GM12878 (cell line): ENCODE measurements at regions of chr3 and their contacts with region 1.

Region 1: GRCh38 chr3:101803173-101803782 is 24.3 kb downstream of the NXPE3 start:
- DNase-seq: no peak
- ATAC-seq: peak; percentile 100
- H3K4me3 ChIP-seq: no peak overlapping the region
- H3K27ac ChIP-seq: no peak overlapping the region
- H3K4me1 ChIP-seq: peaks cover 11% of the 10 kb centered on the region
- H3K27me3 ChIP-seq: no peaks in the 10 kb centered on the region
- CTCF ChIP-seq: peak; percentile 78 to 88 (median 85)
- EP300 ChIP-seq: no peak
- POLR2A ChIP-seq: no peak
- RAD21 ChIP-seq: peak; percentile 70

Region 2: DNA sequence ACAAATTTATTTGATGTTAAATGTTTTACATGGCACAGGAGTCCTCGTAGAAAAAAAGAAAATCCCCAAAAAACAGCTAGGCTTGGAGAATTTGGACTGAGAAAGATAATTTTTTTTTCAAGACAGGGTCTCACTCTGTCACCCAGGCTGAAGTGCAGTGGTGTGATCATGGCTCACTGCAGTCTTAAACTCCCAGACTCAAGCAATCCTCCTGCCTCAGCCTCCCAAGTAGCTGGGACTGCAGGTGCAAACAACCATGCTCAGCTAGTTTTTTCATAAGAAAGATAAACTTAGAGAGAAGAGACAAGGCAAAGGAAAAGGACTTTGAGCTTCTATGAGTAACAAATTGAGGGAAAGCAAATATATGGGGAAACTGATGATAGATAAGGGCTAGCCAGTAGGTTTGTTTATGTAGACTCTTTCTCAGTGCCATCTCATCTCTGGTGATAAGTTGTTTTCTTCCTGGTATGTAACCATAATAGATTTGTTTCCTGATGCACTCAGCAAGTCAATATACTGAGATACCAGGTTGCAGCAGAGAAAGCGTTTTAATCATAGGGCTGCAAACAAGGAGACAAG is 254.7 kb before region 1 on chr3:
- CTCF ChIA-PET with region 1: no interaction called
- POLR2A ChIA-PET with region 1: no interaction called
- RAD21 ChIA-PET with region 1: no interaction called
- SMC1A ChIA-PET with region 1: no interaction called
- in situ Hi-C with region 1: no loop called
- intact Hi-C with region 1: no loop called
- DNase-seq: no peak
- ATAC-seq: no peak
- H3K4me3 ChIP-seq: no peak overlapping the region
- H3K27ac ChIP-seq: no peak overlapping the region
- H3K4me1 ChIP-seq: no peaks in the 10 kb centered on the region
- H3K27me3 ChIP-seq: no peaks in the 10 kb centered on the region
- CTCF ChIP-seq: no peak
- EP300 ChIP-seq: no peak
- POLR2A ChIP-seq: no peak
- RAD21 ChIP-seq: no peak

Region 3: GRCh38 chr3:101643861-101644613 is 159.2 kb before region 1 on chr3:
- CTCF ChIA-PET with region 1: no interaction called
- POLR2A ChIA-PET with region 1: no interaction called
- RAD21 ChIA-PET with region 1: no interaction called
- SMC1A ChIA-PET with region 1: no interaction called
- in situ Hi-C with region 1: no loop called
- intact Hi-C with region 1: no loop called
- DNase-seq: no peak
- ATAC-seq: peak; percentile 69
- H3K4me3 ChIP-seq: no peak overlapping the region
- H3K27ac ChIP-seq: no peak overlapping the region
- H3K4me1 ChIP-seq: no peaks in the 10 kb centered on the region
- H3K27me3 ChIP-seq: no peaks in the 10 kb centered on the region
- CTCF ChIP-seq: no peak
- EP300 ChIP-seq: no peak
- POLR2A ChIP-seq: no peak
- RAD21 ChIP-seq: no peak

Region 4: DNA sequence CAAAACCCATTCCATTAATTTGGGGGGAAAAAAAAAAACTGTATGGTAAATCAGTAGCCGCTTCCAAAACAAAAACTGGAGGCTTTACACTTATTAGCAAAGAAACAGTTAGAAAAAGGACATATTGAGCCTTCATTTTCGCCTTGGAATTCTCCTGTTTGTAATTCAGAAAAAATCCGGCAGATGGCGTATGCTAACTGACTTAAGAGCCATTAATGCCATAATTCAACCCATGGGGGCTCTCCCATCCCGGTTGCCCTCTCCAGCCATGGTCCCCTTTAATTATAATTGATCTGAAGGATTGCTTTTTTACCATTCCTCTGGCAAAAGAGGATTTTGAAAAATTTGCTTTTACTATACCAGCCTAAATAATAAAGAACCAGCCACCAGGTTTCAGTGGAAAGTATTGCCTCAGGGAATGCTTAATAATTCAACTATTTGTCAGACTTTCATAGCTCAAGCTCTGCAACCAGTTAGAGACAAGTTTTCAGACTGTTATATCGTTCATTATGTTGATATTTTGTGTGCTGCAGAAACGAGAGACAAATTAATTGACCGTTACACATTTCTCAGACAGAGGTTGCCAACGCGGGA is 107.4 kb before region 1 on chr3:
- CTCF ChIA-PET with region 1: interaction called, 10 read pairs
- POLR2A ChIA-PET with region 1: interaction called, 3 read pairs
- RAD21 ChIA-PET with region 1: interaction called, 4 read pairs
- SMC1A ChIA-PET with region 1: interaction called, 10 read pairs
- in situ Hi-C with region 1: no loop called
- intact Hi-C with region 1: loop called (anchors 1 kb)
- DNase-seq: no peak
- ATAC-seq: peak; percentile 58
- H3K4me3 ChIP-seq: no peak overlapping the region
- H3K27ac ChIP-seq: no peak overlapping the region
- H3K4me1 ChIP-seq: peaks cover 4% of the 10 kb centered on the region; the same call in 1 of the 2 replicates
- H3K27me3 ChIP-seq: no peaks in the 10 kb centered on the region
- CTCF ChIP-seq: peak; percentile 58 to 65 (median 59)
- EP300 ChIP-seq: no peak
- POLR2A ChIP-seq: no peak
- RAD21 ChIP-seq: peak; percentile 76

Region 5: GRCh38 chr3:101724329-101725193 is 78.7 kb before region 1 on chr3 and contains the start of gene CEP97:
- CTCF ChIA-PET with region 1: interaction called, 14 read pairs
- POLR2A ChIA-PET with region 1: no interaction called
- RAD21 ChIA-PET with region 1: interaction called, 7 read pairs
- SMC1A ChIA-PET with region 1: interaction called, 15 read pairs
- in situ Hi-C with region 1: no loop called
- intact Hi-C with region 1: no loop called
- DNase-seq: peak; percentile 78
- ATAC-seq: peak; percentile 95
- H3K4me3 ChIP-seq: peak within 1 kb of the TSS; percentile 79
- H3K27ac ChIP-seq: peak within 1 kb of the TSS; percentile 38
- H3K4me1 ChIP-seq: peaks cover 15% of the 10 kb centered on the region
- H3K27me3 ChIP-seq: no peaks in the 10 kb centered on the region
- CTCF ChIP-seq: no peak
- EP300 ChIP-seq: no peak
- POLR2A ChIP-seq: peak; percentile 52; the same call in 1 of the 2 replicates
- RAD21 ChIP-seq: no peak
- polyA plus RNA-seq, gene CEP97: 1.9 to 4.3 TPM

Region 6: GRCh38 chr3:101791778-101792177 is 11.5 kb before region 1 on chr3:
- CTCF ChIA-PET with region 1: interaction called, 36 read pairs
- POLR2A ChIA-PET with region 1: no interaction called
- RAD21 ChIA-PET with region 1: interaction called, 10 read pairs
- SMC1A ChIA-PET with region 1: interaction called, 18 read pairs
- in situ Hi-C with region 1: no loop called
- intact Hi-C with region 1: no loop called
- DNase-seq: peak; percentile 91
- ATAC-seq: peak; percentile 99
- H3K4me3 ChIP-seq: no peak overlapping the region
- H3K27ac ChIP-seq: peak overlapping the region; percentile 53
- H3K4me1 ChIP-seq: peaks cover 5% of the 10 kb centered on the region
- H3K27me3 ChIP-seq: no peaks in the 10 kb centered on the region
- CTCF ChIP-seq: no peak
- EP300 ChIP-seq: peak; percentile 74 to 85; a peak in 2 of 4 replicates
- POLR2A ChIP-seq: no peak
- RAD21 ChIP-seq: no peak

Region 7: GRCh38 chr3:101819758-101820157 is 16.5 kb after region 1 on chr3:
- CTCF ChIA-PET with region 1: interaction called, 38 read pairs
- POLR2A ChIA-PET with region 1: no interaction called
- RAD21 ChIA-PET with region 1: interaction called, 8 read pairs
- SMC1A ChIA-PET with region 1: interaction called, 21 read pairs
- in situ Hi-C with region 1: no loop called
- intact Hi-C with region 1: no loop called
- DNase-seq: no peak
- ATAC-seq: peak; percentile 93
- H3K4me3 ChIP-seq: no peak overlapping the region
- H3K27ac ChIP-seq: no peak overlapping the region
- H3K4me1 ChIP-seq: peaks cover 24% of the 10 kb centered on the region
- H3K27me3 ChIP-seq: no peaks in the 10 kb centered on the region
- CTCF ChIP-seq: no peak
- EP300 ChIP-seq: peak in 1 of 2 experiments; percentile 47; a peak in 1 of 4 replicates
- POLR2A ChIP-seq: no peak
- RAD21 ChIP-seq: no peak

Region 8: GRCh38 chr3:102536456-102536855 is 733.2 kb after region 1 on chr3:
- CTCF ChIA-PET with region 1: interaction called, 20 read pairs
- POLR2A ChIA-PET with region 1: no interaction called
- RAD21 ChIA-PET with region 1: interaction called, 5 read pairs
- SMC1A ChIA-PET with region 1: interaction called, 10 read pairs
- in situ Hi-C with region 1: no loop called
- intact Hi-C with region 1: loop called (anchors 2 kb)
- DNase-seq: no peak
- ATAC-seq: peak; percentile 64
- H3K4me3 ChIP-seq: no peak overlapping the region
- H3K27ac ChIP-seq: no peak overlapping the region
- H3K4me1 ChIP-seq: no peaks in the 10 kb centered on the region
- H3K27me3 ChIP-seq: peaks cover 0 to 4% of the 10 kb centered on the region in 2 experiments; a peak in 1 of 4 replicates
- CTCF ChIP-seq: peak; percentile 34 to 56 (median 56); a peak in 5 of 6 replicates
- EP300 ChIP-seq: no peak
- POLR2A ChIP-seq: no peak
- RAD21 ChIP-seq: peak; percentile 70